B cell (primary cell): ENCODE measurements at regions of chr4 and their contacts with region 1.

Region 1: GRCh38 chr4:40309250-40309774 is 25.8 kb upstream of the CHRNA9 start:
- DNase-seq: peak; percentile 91
- ATAC-seq: peak; percentile 16
- H3K4me3 ChIP-seq: peak overlapping the region in 3 of 5 experiments; percentile 17 to 41 (median 38)
- H3K4me3 Mint-ChIP-seq: peak overlapping the region; percentile 87
- H3K27ac ChIP-seq: peak overlapping the region; percentile 94 to 98
- H3K27ac Mint-ChIP-seq: peak overlapping the region; percentile 97
- H3K4me1 ChIP-seq: peaks cover 67 to 71% of the 10 kb centered on the region in 2 donors
- H3K4me1 Mint-ChIP-seq: peaks cover 73% of the 10 kb centered on the region
- H3K27me3 ChIP-seq: no peaks in the 10 kb centered on the region
- H3K27me3 Mint-ChIP-seq: no peaks in the 10 kb centered on the region
- CTCF ChIP-seq: peak; percentile 83

Region 2: DNA sequence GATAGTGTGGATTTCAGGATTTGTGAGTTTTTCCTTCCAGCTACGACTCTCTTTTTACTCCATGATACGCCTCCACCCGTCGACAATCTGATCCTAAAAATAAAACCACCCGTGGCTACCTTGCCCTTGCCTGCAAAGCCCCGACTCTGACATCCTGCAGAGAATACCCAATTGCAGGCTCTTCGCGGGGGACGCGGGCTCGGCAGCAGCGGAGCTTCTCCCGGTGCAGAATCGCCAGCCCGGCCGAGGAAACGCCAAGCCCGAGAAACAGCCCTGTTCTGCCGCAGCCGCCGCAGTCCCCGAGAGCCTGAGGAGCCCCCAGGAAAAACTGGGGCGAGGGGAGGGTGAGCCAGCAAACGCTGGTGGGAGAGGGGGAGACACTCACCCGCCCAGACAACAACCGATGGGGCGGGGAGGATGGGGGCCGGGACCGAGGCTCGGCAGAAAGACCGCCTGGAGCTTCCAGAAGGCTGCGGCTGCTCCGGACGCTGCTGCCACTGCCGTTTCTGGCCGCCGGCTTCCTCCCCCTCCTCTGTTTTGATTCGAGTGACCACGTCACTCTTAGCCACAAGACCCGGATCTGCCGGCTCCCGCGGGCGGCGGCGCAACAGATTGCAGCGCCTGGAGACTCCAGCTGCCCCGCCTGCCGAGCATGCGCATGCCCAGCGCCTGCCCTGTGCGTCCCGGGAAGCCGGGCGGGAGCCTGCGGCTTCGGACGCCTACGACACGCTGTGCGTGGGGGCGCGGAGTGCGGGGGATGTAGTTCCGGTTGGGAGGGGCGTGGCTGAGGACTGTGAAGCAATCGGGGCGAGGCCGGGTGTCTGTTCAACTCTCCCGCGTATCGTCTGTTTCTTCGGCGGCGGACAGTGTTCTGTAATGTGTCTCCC is 670.7 kb before region 1 on chr4 and contains the start of gene SMIM14:
- CTCF ChIA-PET with region 1: no interaction called
- POLR2A ChIA-PET with region 1: no interaction called
- intact Hi-C with region 1: loop called (anchors 5 kb)
- DNase-seq: peak; percentile 93
- ATAC-seq: peak; percentile 80
- H3K4me3 ChIP-seq: peak within 1 kb of the TSS; percentile 79 to 98 (median 93)
- H3K4me3 Mint-ChIP-seq: peak within 1 kb of the TSS; percentile 91
- H3K27ac ChIP-seq: peak within 1 kb of the TSS; percentile 87 to 92
- H3K27ac Mint-ChIP-seq: peak within 1 kb of the TSS; percentile 91
- H3K4me1 ChIP-seq: peaks cover 39% of the 10 kb centered on the region in 2 donors
- H3K4me1 Mint-ChIP-seq: peaks cover 56% of the 10 kb centered on the region
- H3K27me3 ChIP-seq: no peaks in the 10 kb centered on the region
- H3K27me3 Mint-ChIP-seq: no peaks in the 10 kb centered on the region
- CTCF ChIP-seq: no peak
- total RNA-seq, gene SMIM14: 43.5 and 56.0 TPM in 2 replicates

Region 3: DNA sequence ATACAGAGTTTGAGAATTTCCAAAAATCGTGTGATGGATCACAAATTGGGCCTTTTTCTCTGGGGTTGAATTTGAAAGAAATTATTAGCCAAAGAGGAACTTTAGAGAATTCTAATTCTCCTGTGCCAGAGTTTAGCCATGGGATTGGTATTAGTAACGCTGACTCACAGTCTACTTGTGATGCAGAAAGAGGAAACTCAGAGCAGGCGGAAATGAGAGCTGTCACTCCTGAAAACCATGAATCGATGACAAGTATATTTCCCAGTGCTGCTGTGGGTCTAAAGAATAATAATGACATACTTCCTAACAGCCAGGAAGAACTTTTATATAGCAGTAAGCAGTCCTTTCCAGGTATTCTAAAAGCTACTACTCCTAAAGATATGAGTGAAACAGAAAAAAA is 187.8 kb before region 1 on chr4:
- CTCF ChIA-PET with region 1: no interaction called
- POLR2A ChIA-PET with region 1: no interaction called
- intact Hi-C with region 1: no loop called
- DNase-seq: peak; percentile 10
- ATAC-seq: no peak
- H3K4me3 ChIP-seq: no peak overlapping the region
- H3K4me3 Mint-ChIP-seq: no peak overlapping the region
- H3K27ac ChIP-seq: no peak overlapping the region
- H3K27ac Mint-ChIP-seq: no peak overlapping the region
- H3K4me1 ChIP-seq: peaks cover 0 to 5% of the 10 kb centered on the region in 2 donors
- H3K4me1 Mint-ChIP-seq: peaks cover 8% of the 10 kb centered on the region
- H3K27me3 ChIP-seq: no peaks in the 10 kb centered on the region
- H3K27me3 Mint-ChIP-seq: no peaks in the 10 kb centered on the region
- CTCF ChIP-seq: no peak

Region 4: DNA sequence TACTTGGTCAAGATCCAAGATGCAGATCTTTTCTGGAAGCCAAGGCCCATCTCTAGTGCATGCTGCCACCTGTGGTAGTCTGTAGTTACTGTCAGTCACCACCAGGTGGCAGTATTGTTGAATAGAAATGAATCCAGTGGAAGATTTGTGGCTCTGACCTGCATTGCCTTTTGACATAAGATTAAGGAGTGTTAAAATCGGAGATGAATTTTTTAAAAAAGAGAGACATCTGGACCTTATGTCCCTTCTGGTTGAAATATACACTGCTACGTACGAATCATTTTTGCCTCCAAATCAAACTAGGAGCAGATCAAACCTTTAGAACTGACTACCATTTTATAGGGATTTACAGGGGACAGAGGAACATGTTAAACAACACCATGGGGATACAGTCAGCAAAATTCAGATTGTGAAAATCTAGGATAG is 159.3 kb before region 1 on chr4:
- CTCF ChIA-PET with region 1: interaction called, 134 read pairs
- POLR2A ChIA-PET with region 1: no interaction called
- intact Hi-C with region 1: loop called (anchors 1 kb)
- DNase-seq: peak; percentile 87
- ATAC-seq: peak; percentile 95
- H3K4me3 ChIP-seq: no peak overlapping the region
- H3K4me3 Mint-ChIP-seq: peak overlapping the region; percentile 27
- H3K27ac ChIP-seq: peak overlapping the region; percentile 20 to 54
- H3K27ac Mint-ChIP-seq: peak overlapping the region; percentile 77
- H3K4me1 ChIP-seq: peaks cover 22 to 32% of the 10 kb centered on the region in 2 donors
- H3K4me1 Mint-ChIP-seq: peaks cover 38% of the 10 kb centered on the region
- H3K27me3 ChIP-seq: no peaks in the 10 kb centered on the region
- H3K27me3 Mint-ChIP-seq: no peaks in the 10 kb centered on the region
- CTCF ChIP-seq: peak; percentile 83

Region 5: GRCh38 chr4:40205259-40206198 is 103.8 kb before region 1 on chr4:
- CTCF ChIA-PET with region 1: interaction called, 47 read pairs
- POLR2A ChIA-PET with region 1: interaction called, 5 read pairs
- intact Hi-C with region 1: loop called (anchors 2 kb)
- DNase-seq: peak; percentile 66
- ATAC-seq: peak; percentile 46
- H3K4me3 ChIP-seq: peak overlapping the region; percentile 21 to 61 (median 43)
- H3K4me3 Mint-ChIP-seq: peak overlapping the region; percentile 86
- H3K27ac ChIP-seq: peak overlapping the region; percentile 65 to 82
- H3K27ac Mint-ChIP-seq: peak overlapping the region; percentile 88
- H3K4me1 ChIP-seq: peaks cover 83 to 88% of the 10 kb centered on the region in 2 donors
- H3K4me1 Mint-ChIP-seq: peaks cover 87% of the 10 kb centered on the region
- H3K27me3 ChIP-seq: no peaks in the 10 kb centered on the region
- H3K27me3 Mint-ChIP-seq: no peaks in the 10 kb centered on the region
- CTCF ChIP-seq: no peak

Region 6: DNA sequence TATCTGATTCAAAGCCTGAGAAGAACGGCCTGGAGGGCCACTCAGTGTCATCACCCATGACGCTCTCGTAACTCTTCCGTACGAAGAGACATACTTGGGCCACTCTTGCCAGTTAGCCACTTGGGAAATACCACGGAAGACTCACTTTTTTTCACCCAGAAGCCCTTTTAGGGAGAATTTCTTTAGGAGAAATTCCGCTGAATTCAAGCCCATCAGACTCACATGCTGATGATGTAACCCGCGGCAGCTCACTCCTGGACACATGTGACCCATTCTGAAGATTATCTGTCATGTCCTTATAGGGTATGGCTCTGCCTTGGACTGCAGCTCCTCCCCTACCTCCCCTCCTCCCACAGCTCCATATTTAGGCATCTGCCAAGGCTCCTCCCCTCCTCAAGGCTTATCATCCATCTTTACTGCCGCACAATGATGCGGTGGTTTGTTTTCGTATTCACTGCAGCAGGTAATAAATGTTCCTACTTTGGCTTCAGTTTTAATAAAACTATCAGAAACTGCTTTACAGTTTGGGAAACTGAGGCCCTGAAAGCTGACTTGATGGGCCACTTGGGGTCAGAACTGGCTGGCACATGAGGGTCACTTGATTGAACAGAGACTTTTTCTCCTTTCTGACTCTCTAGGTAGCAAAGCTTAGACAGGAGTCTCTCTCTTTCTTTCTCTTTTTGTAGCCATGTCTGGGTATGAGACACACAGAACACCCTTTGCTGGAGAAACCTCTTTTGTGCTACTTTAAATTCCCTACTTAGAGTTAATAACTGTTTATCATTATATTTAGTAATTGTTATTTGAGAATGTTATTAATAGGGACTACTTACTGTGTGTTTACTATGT is 70.4 kb before region 1 on chr4:
- CTCF ChIA-PET with region 1: interaction called, 135 read pairs
- POLR2A ChIA-PET with region 1: interaction called, 6 read pairs
- intact Hi-C with region 1: no loop called
- DNase-seq: no peak
- ATAC-seq: peak; percentile 32
- H3K4me3 ChIP-seq: no peak overlapping the region
- H3K4me3 Mint-ChIP-seq: peak overlapping the region; percentile 27
- H3K27ac ChIP-seq: peak overlapping the region; percentile 3 to 60
- H3K27ac Mint-ChIP-seq: peak overlapping the region; percentile 83
- H3K4me1 ChIP-seq: peaks cover 74 to 80% of the 10 kb centered on the region in 2 donors
- H3K4me1 Mint-ChIP-seq: peaks cover 81% of the 10 kb centered on the region
- H3K27me3 ChIP-seq: no peaks in the 10 kb centered on the region
- H3K27me3 Mint-ChIP-seq: no peaks in the 10 kb centered on the region
- CTCF ChIP-seq: no peak

Region 7: DNA sequence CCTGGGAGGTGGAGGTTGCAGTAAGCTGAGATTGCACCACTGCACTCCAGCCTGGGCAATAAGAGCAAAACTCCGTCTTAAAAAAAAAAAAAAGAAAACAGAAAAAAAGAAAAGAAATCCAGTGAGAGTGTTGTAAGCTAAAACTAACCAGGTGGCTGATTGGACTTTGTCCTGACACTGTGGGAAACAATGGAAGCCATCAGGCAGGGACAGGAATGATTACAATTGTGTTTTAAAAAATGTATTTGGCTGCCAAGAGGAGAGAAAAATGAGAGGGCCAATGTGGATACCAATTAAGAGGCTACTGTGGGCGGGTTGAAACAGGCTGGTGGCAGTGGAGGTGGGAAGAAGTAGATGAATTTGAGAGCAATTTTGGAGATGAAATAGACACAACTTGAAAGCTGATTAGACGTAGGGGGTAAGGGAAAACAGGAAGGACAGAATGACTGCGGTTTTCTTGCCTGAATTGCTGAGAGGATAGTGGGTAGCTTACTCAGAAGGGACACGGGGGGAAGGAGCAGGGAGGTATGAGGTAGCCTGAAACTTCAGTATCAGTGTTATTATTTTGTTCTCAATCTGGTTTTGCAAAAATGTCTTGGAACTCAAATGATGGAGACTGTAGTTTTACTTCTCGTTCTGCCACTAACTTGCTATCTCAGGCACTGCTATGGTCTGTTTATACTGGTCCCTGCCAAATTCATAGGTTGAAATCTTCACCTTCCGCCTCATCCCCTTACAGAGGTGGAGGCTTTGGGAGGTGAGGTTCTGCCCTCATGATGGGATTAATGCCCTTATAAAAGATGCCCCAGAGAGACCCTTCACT is 19.7 kb before region 1 on chr4:
- CTCF ChIA-PET with region 1: interaction called, 43 read pairs
- POLR2A ChIA-PET with region 1: interaction called, 6 read pairs
- intact Hi-C with region 1: loop called (anchors 1 kb)
- DNase-seq: peak; percentile 61
- ATAC-seq: peak; percentile 58
- H3K4me3 ChIP-seq: peak overlapping the region in 3 of 5 experiments; percentile 6 to 27 (median 15)
- H3K4me3 Mint-ChIP-seq: peak overlapping the region; percentile 76
- H3K27ac ChIP-seq: peak overlapping the region; percentile 78 to 86
- H3K27ac Mint-ChIP-seq: peak overlapping the region; percentile 92
- H3K4me1 ChIP-seq: peaks cover 63 to 70% of the 10 kb centered on the region in 2 donors
- H3K4me1 Mint-ChIP-seq: peaks cover 68% of the 10 kb centered on the region
- H3K27me3 ChIP-seq: no peaks in the 10 kb centered on the region
- H3K27me3 Mint-ChIP-seq: no peaks in the 10 kb centered on the region
- CTCF ChIP-seq: no peak